Endothelial cell of umbilical vein (primary cell): ENCODE measurements at regions of chr15 and their contacts with region 1.

Region 1: GRCh38 chr15:57561041-57561711 is 30.5 kb upstream of the MYZAP start:
- DNase-seq: peak; percentile 96
- H3K4me3 ChIP-seq: peak overlapping the region in 1 of 3 experiments; percentile 37
- H3K27ac ChIP-seq: peak overlapping the region; percentile 97
- H3K4me1 ChIP-seq: peaks cover 15% of the 10 kb centered on the region
- H3K27me3 ChIP-seq: no peaks in the 10 kb centered on the region
- CTCF ChIP-seq: peak; percentile 79 to 89
- POLR2A ChIP-seq: no peak

Region 2: GRCh38 chr15:57578288-57578900 is 17.2 kb after region 1 on chr15:
- CTCF ChIA-PET with region 1: interaction called, 16 read pairs
- POLR2A ChIA-PET with region 1: interaction called, 8 read pairs
- dilution Hi-C with region 1: no loop called
- intact Hi-C with region 1: loop called (anchors 1 kb)
- DNase-seq: peak; percentile 95
- H3K4me3 ChIP-seq: no peak overlapping the region
- H3K27ac ChIP-seq: peak overlapping the region; percentile 84
- H3K4me1 ChIP-seq: peaks cover 21% of the 10 kb centered on the region
- H3K27me3 ChIP-seq: no peaks in the 10 kb centered on the region
- CTCF ChIP-seq: no peak
- POLR2A ChIP-seq: peak; percentile 19

Region 3: DNA sequence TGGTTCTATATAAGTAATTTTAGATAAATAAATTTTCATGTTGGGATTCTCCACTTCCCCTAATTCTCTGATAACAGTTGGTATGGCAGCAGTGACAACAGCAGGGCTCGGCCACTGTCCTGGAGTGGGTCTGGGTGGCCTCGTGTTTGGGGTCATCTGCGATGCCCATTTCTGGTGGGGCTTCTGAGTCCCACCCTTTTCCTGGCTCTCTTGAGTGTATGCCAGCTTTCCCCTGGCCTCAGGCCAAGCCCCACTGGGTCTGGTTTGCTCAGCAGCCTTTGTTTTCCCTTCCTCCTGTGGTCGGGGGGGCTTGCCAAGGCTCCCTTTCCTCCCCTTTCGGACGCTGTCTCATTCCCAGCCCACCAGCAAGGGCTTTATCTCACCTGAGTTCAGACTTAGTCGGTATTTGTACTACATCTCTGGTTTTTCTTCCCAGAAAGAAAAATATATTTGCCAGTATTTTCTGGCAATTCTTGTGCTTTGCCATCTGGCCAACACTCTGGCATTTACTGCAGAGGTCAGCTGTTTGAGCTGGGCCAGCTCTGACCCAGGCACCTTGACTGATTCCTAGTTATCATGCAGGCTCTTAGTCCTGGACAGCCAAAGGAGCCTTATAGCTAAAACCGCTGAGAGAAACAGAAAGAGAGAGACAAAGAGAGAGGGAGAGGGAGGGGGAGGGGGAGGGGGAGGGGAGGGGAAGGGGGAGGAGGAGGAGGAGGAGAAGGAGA is 65.7 kb after region 1 on chr15:
- CTCF ChIA-PET with region 1: interaction called, 12 read pairs
- POLR2A ChIA-PET with region 1: no interaction called
- dilution Hi-C with region 1: no loop called
- intact Hi-C with region 1: loop called (anchors 2 kb)
- DNase-seq: peak; percentile 75
- H3K4me3 ChIP-seq: no peak overlapping the region
- H3K27ac ChIP-seq: no peak overlapping the region
- H3K4me1 ChIP-seq: peaks cover 14% of the 10 kb centered on the region
- H3K27me3 ChIP-seq: no peaks in the 10 kb centered on the region
- CTCF ChIP-seq: no peak
- POLR2A ChIP-seq: no peak

Region 4: GRCh38 chr15:57654153-57654852 is 93.1 kb after region 1 on chr15:
- CTCF ChIA-PET with region 1: interaction called, 27 read pairs
- POLR2A ChIA-PET with region 1: no interaction called
- dilution Hi-C with region 1: no loop called
- intact Hi-C with region 1: no loop called
- DNase-seq: no peak
- H3K4me3 ChIP-seq: no peak overlapping the region
- H3K27ac ChIP-seq: no peak overlapping the region
- H3K4me1 ChIP-seq: no peaks in the 10 kb centered on the region
- H3K27me3 ChIP-seq: no peaks in the 10 kb centered on the region
- CTCF ChIP-seq: no peak
- POLR2A ChIP-seq: no peak

Region 5: DNA sequence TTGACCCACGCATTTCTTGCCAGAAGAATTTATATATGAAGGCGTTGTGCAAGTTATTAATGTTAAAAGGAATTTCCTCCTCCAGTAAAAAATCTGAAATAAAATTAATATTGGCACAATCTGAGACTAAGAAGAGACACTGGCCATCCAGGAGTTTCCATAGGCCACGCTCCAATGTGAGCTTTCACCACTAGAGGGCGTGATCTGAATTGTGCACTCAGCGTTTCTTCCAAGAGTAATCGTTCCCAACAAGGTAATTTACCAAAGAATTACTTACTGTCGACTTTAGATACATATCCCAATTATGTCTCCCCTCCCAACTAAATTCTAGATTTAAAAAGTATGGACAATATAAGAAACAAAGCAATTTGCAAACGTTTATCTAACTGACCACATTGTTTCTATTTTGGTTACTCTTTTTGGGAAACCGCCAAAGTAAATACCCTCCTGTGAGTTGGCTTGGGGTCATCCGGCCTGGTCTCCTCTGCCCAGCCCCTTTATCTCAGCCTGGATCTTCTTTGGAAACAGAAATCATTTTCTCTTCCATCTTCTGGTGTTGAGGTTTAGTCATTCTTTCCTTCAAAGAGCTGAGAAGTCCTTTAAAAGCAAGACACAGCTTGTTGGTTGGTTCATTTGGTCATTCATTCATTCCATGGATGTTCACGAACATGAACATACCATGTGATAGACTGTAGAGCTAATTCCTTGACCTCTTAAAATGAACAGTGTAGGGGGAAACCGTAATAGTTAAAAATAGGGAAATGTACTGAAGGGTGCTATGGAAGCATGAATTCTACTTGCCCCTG is 171.6 kb after region 1 on chr15:
- CTCF ChIA-PET with region 1: interaction called, 6 read pairs
- POLR2A ChIA-PET with region 1: no interaction called
- dilution Hi-C with region 1: no loop called
- intact Hi-C with region 1: loop called (anchors 5 kb)
- DNase-seq: peak; percentile 79
- H3K4me3 ChIP-seq: peak overlapping the region in 1 of 3 experiments; percentile 15
- H3K27ac ChIP-seq: no peak overlapping the region
- H3K4me1 ChIP-seq: peaks cover 10% of the 10 kb centered on the region
- H3K27me3 ChIP-seq: no peaks in the 10 kb centered on the region
- CTCF ChIP-seq: peak; percentile 78 to 89
- POLR2A ChIP-seq: no peak

Region 6: DNA sequence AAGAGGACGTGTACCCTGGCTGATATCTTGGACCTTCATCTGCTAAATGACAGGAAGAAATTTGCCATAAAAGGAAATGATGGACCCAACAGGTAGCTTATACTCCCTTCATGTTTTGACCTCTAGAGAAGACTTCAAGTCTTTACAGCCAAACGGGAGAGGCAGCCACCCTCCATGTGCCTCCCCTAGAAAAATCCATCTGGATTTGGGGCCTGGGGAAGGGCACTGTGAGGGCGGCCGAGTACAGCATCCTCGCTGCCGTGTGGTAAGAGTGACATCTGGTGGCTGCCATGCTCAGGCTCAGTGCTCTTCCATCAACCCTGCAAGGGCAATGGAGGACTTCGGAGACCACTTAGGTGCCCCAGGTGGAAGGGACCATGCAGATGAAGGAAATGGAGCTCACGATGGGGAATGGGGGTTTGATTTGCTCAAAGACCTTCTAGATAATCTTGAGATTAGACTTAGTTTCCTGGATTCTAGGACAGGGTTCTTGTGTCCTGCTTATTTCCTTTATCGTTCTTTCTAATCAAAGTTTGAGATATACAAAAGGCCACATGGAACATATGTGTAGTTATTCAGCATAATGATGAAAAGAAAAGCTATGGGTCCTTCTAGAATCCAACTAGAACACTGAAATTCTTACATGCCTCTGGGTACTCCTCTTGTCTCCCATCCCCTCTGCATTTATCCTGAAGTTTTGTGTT is 621.4 kb after region 1 on chr15:
- CTCF ChIA-PET with region 1: no interaction called
- POLR2A ChIA-PET with region 1: no interaction called
- dilution Hi-C with region 1: no loop called
- intact Hi-C with region 1: loop called (anchors 1 kb)
- DNase-seq: peak; percentile 76
- H3K4me3 ChIP-seq: no peak overlapping the region
- H3K27ac ChIP-seq: no peak overlapping the region
- H3K4me1 ChIP-seq: peaks cover 20% of the 10 kb centered on the region
- H3K27me3 ChIP-seq: no peaks in the 10 kb centered on the region
- CTCF ChIP-seq: peak; percentile 83 to 93
- POLR2A ChIP-seq: no peak